ENCODE measurements at regions of chr9 and their contacts with region 1.

Region 1: DNA sequence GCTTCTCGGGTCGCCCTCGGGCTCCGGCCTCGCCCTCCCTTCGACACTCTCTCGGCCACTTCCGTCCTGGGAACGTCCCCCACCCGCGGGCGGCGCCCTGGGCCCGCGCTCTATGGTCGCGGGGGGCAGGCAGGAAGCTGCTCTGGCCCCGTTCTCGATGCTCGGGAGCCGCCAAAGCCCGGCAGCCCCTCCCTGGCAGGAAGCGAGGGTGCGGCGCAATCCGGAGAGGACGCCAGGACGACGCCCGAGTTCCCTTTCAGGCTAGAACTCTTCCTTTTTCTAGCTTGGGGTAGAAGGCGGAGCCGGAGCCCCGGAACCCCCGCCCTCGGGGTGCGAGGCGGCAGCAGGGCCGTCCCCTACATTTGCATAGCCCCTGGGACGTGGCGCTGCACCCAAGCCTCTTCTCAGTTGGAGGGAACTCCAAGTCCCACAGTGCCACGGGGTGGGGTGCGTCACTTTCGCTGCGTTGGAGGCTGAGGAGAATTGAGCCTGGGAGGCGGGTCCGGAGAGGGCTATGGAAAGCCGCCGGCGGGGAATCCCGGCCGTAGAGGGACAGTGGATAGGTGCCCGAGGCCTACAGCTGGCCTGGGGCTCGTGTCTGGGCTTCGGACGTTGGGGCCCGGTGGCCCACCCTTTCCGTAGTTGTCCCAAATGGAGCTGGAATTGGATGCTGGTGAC is at the starts of genes CREB3 and TLN1:
- DNase-seq: peak; percentile 92 to 96
- H3K4me3 ChIP-seq: peak within 1 kb of the TSS; percentile 86
- H3K27ac ChIP-seq: peak within 1 kb of the TSS; percentile 79
- H3K4me1 ChIP-seq: peaks cover 48% of the 10 kb centered on the region
- H3K27me3 ChIP-seq: no peaks in the 10 kb centered on the region
- CTCF ChIP-seq: no peak
- total RNA-seq, gene CREB3: 22.4 and 23.6 TPM in 2 replicates
- total RNA-seq, gene TLN1: 101 and 114 TPM in 2 replicates

Region 2: DNA sequence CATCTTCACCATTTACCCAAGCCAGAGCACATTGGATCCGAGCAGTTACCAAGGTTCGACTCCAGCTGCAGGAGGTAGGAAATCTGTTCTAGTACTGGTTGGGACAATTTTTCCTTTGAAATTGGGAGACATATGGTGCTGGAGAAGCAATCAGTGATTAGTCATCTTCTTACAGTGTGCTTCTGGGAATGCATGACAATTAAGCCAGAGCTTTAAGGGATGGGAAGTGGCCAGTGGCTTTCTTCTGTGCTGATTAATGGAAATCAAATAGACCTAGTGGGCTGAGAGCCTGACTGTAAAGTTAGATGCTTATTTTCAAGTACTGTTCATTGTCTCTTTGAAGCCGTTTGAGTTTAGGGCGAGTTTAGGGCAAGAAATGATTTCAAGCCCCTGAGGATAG is 418.3 kb before region 1 on chr9:
- CTCF ChIA-PET with region 1: no interaction called
- POLR2A ChIA-PET with region 1: no interaction called
- intact Hi-C with region 1: no loop called
- DNase-seq: no peak
- H3K4me3 ChIP-seq: no peak overlapping the region
- H3K27ac ChIP-seq: no peak overlapping the region
- H3K4me1 ChIP-seq: no peaks in the 10 kb centered on the region
- H3K27me3 ChIP-seq: no peaks in the 10 kb centered on the region
- CTCF ChIP-seq: no peak

Region 3: GRCh38 chr9:35603987-35604577 is 128.2 kb before region 1 on chr9:
- CTCF ChIA-PET with region 1: no interaction called
- POLR2A ChIA-PET with region 1: no interaction called
- intact Hi-C with region 1: loop called (anchors 5 kb)
- DNase-seq: peak; percentile 94 to 97
- H3K4me3 ChIP-seq: peak overlapping the region; percentile 75
- H3K27ac ChIP-seq: peak overlapping the region; percentile 71
- H3K4me1 ChIP-seq: peaks cover 14% of the 10 kb centered on the region; the same call in 1 of the 2 replicates
- H3K27me3 ChIP-seq: no peaks in the 10 kb centered on the region
- CTCF ChIP-seq: peak; percentile 80

Region 4: DNA sequence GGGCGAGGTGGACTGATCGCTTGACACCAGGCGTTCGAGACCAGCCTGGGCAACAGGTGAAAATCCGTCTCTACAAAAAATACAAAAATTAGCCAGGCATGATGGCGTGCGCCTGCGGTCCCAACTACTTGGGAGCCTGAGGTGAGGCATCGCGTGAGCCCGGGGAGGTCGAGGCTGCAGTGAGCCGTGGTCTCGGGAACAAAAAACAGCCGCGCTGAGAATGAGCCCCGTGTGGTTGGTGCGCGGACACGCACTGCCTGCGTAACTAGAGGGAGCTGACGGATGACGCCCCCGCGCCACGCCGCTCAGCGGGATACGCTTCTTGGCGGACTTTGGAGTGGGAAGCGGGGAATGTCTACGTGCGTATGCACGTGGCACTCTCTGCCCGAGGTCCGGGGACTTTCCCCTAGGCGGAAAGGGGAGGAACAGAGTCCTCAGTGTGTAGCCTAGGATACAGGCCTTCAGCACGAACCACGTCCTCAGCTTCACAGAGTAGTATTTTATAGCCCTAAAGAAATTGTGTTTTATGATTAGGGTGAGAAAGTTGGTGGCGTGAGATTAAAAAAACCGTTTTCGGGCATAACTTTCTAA is 74.6 kb before region 1 on chr9 and contains the start of gene RMRP:
- CTCF ChIA-PET with region 1: interaction called, 4 read pairs
- POLR2A ChIA-PET with region 1: interaction called, 28 read pairs
- intact Hi-C with region 1: loop called (anchors 2 kb)
- DNase-seq: peak; percentile 91
- H3K4me3 ChIP-seq: peak within 1 kb of the TSS; percentile 72
- H3K27ac ChIP-seq: peak within 1 kb of the TSS; percentile 94
- H3K4me1 ChIP-seq: peaks cover 26% of the 10 kb centered on the region
- H3K27me3 ChIP-seq: no peaks in the 10 kb centered on the region
- CTCF ChIP-seq: no peak; the same call in 1 of the 2 replicates
- total RNA-seq, gene RMRP: 13,432 and 13,506 TPM in 2 replicates

Region 5: DNA sequence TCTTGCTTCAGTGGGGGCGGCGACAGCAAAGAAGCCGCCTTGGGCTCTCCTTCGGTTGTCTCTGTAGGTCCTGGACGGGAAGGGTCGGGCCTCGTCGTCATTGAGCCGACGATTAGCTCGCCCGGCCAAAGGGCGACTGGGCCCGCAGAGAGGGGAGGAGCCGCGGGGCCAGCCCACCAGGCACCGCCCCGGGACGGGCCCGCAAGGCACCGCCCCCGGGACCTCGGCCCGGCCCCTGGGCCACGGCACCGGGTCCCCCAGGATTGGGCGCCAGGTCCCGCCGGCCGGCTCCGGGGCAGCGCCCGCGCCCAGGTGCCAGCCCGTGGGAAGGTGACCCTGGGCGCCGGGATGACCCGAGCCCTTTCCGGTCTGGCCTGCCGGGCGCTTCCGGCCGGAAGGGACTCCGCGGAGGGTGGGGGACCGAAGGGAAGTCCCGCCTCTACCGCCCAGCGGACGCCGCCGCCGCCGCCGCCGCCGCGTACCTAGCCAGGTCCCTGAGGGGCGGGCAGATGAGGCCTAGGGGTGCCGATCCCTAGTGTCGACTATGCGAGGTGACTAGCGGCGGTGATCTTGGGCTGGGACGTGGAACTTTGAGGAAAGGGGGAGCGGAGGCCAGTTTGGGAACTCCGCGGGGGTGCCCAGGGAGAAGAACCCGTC is 16.7 kb after region 1 on chr9 and contains the starts of genes GBA2 and RGP1:
- CTCF ChIA-PET with region 1: interaction called, 7 read pairs
- POLR2A ChIA-PET with region 1: interaction called, 6 read pairs
- intact Hi-C with region 1: loop called (anchors 2 kb)
- DNase-seq: peak; percentile 69 to 77
- H3K4me3 ChIP-seq: peak within 1 kb of the TSS; percentile 79
- H3K27ac ChIP-seq: peak within 1 kb of the TSS; percentile 51
- H3K4me1 ChIP-seq: peaks cover 23% of the 10 kb centered on the region
- H3K27me3 ChIP-seq: no peaks in the 10 kb centered on the region
- CTCF ChIP-seq: no peak
- total RNA-seq, gene GBA2: 25.0 and 29.6 TPM in 2 replicates
- total RNA-seq, gene RGP1: 21.8 and 25.1 TPM in 2 replicates